HEK293T (cell line): ENCODE measurements at regions of chr15 and their contacts with region 1.

Region 1: GRCh38 chr15:78565097-78565951 is at the start of gene CHRNA5:
- DNase-seq: peak; percentile 87

Region 2: GRCh38 chr15:78322243-78322642 is 243.1 kb before region 1 on chr15:
- CTCF ChIA-PET with region 1: no interaction called
- POLR2A ChIA-PET with region 1: no interaction called
- DNase-seq: no peak

Region 3: GRCh38 chr15:78506971-78507830 is 58.1 kb before region 1 on chr15 and contains the start of gene HYKK:
- CTCF ChIA-PET with region 1: no interaction called
- POLR2A ChIA-PET with region 1: interaction called, 20 read pairs
- DNase-seq: peak; percentile 97

Region 4: DNA sequence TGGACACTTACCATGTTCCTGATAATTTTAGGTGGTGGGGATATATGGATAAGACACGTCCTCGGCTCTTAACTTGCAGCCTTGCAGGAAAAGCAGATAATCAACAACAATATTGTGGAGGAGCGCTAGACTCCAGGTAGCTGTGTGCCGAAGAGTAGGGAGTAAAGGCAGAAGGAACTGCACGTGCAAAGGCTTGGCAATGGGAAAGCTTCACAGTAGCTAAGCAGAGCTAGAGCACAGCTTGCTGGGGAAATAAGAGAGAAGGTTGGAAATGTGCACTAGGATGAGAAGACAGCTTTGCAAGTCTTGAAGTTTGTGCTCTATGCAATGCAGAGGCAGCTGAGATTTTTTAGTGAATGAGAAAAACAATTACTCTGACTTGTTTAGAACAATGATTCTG is 12.7 kb before region 1 on chr15:
- CTCF ChIA-PET with region 1: interaction called, 5 read pairs
- POLR2A ChIA-PET with region 1: interaction called, 58 read pairs
- DNase-seq: no peak